CD14-positive monocyte (primary cell): ENCODE measurements at regions of chr5 and their contacts with region 1.

Region 1: GRCh38 chr5:78509884-78510769 is 138.4 kb downstream of the LHFPL2 start:
- DNase-seq: peak; percentile 44 to 49 (median 47)
- H3K4me3 ChIP-seq: peak overlapping the region; percentile 54 to 86 (median 70)
- H3K4me3 Mint-ChIP-seq: peak overlapping the region; percentile 97 to 99
- H3K27ac ChIP-seq: peak overlapping the region; percentile 57 to 88
- H3K27ac Mint-ChIP-seq: peak overlapping the region; percentile 92 to 96 (median 93)
- H3K4me1 ChIP-seq: peaks cover 63 to 70% of the 10 kb centered on the region in 2 donors
- H3K4me1 Mint-ChIP-seq: peaks cover 74% of the 10 kb centered on the region
- H3K27me3 ChIP-seq: no peaks in the 10 kb centered on the region
- H3K27me3 Mint-ChIP-seq: peaks cover 0 to 3% (median 2%) of the 10 kb centered on the region in 3 donors
- CTCF ChIP-seq: no peak

Region 2: DNA sequence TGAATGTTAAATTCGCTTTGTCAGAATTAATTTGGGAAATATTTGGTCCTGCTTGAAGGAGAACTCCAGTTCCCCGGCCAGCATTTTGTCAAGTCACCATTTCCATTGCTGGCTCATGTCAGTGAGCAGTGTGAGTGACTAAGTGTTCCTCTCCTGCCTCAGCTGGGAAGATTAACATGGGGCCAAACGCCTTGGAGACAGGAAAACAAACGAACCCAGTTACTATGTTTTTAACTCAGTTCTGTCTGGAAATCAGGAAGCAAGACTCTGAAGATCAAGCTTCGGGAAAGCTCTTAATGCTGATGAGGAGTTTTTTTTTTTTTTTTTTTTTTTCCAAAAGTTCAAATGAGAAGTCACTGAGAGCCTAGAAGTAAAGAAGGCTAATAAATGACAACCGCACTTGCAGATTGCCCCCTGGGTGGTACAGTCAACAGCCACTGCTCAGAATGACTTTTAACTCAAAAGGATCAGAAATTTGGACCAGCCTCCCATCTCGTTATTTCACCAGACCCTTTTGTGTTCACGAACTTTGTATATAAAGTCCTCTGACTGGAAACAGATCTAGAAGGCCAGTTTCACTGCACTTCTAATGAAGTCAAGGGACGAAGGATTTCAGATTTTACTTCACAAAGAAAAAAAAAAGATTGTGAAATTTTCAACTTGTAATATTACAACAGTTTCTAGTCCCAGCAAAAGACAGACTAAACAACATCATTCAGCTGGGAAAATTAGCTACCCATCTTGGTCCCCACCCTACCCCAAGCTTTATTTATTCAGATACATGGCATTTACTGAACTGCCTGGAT is 17.1 kb after region 1 on chr5:
- intact Hi-C with region 1: loop called (anchors 2 kb)
- DNase-seq: peak; percentile 91 to 99 (median 98)
- H3K4me3 ChIP-seq: peak overlapping the region in 1 of 3 experiments; percentile 18
- H3K4me3 Mint-ChIP-seq: peak overlapping the region in 1 of 2 donors; percentile 15
- H3K27ac ChIP-seq: peak overlapping the region; percentile 67 to 93
- H3K27ac Mint-ChIP-seq: peak overlapping the region; percentile 93 to 98 (median 96)
- H3K4me1 ChIP-seq: peaks cover 48 to 56% of the 10 kb centered on the region in 2 donors
- H3K4me1 Mint-ChIP-seq: peaks cover 60% of the 10 kb centered on the region
- H3K27me3 ChIP-seq: no peaks in the 10 kb centered on the region
- H3K27me3 Mint-ChIP-seq: peaks cover 0 to 1% (median 1%) of the 10 kb centered on the region in 3 donors
- CTCF ChIP-seq: no peak